Posterior cingulate gyrus (tissue), 11 donors: ENCODE measurements at regions of chr7 and their contacts with region 1.

Region 1: DNA sequence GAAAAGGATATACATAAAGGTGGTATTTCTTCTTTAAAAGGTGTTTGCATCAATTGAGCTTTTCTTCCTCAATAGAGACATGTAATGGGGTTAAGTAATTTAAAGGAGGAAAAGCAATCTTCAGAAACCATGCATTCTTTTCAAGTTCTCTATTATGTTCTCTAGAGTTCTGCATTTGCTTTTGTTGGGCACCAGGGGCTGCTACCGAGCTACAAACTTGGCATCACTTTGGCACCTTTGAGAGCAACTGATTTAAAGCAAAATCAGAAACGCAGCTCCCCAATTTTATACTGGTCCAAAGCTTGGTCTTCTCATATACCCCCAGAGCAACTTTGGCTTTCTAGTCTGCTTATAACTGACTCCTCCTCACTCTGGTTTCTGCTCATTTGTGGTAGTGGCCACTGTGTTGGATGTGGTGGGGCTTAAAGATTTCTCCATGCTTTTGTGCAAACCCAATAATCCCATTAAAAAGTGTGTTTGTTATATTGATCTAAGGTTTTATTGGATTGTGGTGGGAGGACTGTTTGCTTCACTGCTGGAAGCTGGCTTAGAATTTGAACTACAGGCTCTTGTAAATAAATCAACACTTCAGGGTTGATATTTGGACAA is 712.1 kb downstream of the PHTF2 start:
- DNase-seq: peak in 6 of 10 donors; percentile 29 to 91 (median 49)

Region 2: DNA sequence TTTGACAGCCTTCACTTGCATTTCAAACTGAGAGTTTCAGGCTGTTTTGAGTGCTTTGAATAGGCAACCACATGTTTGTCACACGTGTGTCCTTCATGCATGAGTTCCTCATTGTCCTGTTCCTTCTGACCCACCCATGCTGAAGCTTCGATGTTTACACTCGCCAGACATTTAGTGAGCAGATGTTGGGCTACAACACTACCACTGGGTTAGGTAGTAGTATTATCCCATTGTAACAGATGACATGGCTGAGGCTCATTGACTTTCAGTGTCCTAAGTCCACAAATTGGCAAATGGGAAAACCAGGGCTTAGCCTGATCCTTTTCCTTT is 256.0 kb before region 1 on chr7:
- intact Hi-C with region 1: no loop called
- DNase-seq: no peak

Region 3: DNA sequence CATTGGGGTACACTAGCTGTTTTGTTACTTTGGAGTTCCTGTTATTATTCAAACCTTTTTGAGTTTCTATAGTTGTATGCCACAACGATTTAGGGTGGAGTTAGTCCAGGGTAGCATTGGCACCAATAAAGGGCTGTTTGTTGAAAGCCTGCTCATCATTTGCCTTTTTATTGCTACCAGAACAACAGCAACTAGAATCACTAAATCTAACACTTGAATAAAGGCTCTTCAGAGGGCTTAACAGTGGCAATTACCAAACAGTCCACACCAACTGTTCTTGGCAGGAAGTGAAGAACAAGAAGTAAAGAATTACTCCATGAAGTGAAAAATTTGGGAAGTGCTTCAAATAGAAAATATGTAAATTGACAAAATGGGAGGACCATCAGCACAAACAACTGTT is 90.7 kb before region 1 on chr7:
- intact Hi-C with region 1: no loop called
- DNase-seq: no peak

Region 4: DNA sequence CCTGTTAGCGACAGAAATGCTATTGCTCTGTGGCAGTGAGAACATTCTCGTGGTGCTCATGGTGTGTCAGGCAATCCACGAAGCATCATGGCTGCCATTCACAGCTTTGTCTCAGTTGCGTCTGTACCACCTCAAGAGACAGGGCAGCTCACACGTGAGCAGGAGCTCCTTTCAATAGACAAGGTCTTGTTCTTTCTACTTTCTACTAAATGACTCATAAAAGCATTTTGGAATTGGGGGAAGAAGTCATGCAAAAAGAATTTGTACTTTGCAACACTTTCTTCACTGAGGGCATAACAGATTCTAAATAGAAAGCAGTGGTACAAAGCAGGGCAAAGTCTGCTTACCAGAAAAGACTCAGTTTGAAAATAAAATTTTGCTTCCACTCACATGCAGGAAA is 73.6 kb before region 1 on chr7:
- intact Hi-C with region 1: no loop called
- DNase-seq: peak in 1 of 10 donors; percentile 63

Region 5: DNA sequence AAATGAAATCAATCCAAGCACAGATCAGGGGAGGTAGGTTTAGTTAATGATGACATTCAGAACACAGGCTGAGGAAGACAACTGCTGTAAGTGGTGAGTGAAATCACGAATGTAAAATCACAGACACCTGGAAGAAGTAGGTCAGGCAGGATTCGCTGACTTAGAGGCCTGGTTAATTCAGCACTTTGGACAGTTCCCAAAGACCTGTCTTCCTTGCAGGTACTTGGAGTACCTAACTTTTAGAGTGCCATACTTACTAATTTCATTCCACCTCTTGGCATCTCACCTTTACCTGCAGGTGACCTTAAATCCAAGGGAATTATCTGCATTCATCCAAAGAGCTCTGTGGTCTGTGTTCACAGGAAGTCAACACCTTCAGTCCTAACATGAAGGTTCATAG is 110.2 kb after region 1 on chr7:
- intact Hi-C with region 1: no loop called
- DNase-seq: no peak

Region 6: DNA sequence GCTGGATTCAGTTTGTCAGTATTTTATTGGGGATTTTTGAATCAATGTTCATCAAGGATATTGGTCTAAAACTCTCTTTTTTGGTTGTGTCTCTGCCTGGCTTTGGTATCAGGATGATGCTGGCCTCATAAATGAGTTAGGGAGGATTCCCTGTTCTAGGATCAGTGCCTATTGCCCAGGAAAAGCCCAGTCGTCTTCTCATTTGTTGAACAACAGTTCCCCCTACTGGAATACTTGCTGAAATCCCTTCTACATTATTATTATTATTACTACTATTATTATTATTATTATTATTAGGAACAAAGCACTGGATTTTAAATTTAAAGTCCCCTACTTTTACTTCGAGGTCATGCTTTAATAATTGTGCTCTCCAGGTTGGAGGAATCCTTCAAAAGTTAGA is 413.9 kb after region 1 on chr7:
- intact Hi-C with region 1: loop called (anchors 5 kb)
- DNase-seq: no peak

Region 7: GRCh38 chr7:79176859-79177477 is 666.3 kb after region 1 on chr7:
- intact Hi-C with region 1: loop called (anchors 5 kb)
- DNase-seq: peak in 1 of 10 donors; percentile 13